Left cardiac atrium (tissue), 4 donors: ENCODE measurements at regions of chr6 and their contacts with region 1.

Region 1: DNA sequence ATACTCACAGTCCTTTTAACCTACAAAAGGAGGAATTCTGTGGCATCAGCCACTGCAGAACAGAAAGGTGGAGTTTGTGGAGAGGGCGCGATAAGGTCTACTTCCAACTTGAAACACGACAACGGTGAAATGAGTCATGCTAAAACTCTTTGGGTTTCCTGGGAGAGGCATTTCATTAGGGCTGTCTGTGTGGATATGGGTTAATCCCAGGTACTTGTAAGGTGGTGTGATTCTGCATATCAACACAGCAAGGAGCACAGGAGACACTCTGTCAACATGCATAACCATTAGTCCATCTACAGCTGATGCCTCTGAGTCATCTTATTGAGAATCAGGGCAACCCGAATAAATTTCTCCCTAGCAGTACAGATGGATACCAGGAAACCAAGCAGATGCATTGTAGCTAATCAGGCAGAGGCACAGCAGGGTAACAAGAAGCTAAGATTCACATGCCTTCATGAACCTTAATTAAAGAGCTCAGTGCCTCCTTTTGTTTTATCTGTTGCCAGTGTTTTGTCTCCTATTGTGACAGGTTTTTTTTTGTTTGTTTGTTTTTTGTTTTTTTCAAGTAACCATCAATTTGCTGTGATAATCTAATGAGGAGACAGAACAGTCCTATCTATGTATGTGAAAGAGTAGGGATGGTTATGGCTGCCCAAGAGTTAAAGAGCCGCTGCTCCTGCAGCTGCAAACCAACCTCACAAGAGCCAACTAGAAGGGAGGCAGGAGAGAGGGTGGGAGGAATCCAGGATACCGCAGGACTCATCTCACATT is 315.8 kb upstream of the SOX4 start:
- DNase-seq: no peak
- ATAC-seq: peak; percentile 35 to 84

Region 2: GRCh38 chr6:21046276-21046675 is 231.5 kb before region 1 on chr6:
- intact Hi-C with region 1: loop called in 1 of 2 experiments (anchors 10 kb)
- DNase-seq: peak; percentile 34
- ATAC-seq: peak; percentile 91 to 92

Region 3: DNA sequence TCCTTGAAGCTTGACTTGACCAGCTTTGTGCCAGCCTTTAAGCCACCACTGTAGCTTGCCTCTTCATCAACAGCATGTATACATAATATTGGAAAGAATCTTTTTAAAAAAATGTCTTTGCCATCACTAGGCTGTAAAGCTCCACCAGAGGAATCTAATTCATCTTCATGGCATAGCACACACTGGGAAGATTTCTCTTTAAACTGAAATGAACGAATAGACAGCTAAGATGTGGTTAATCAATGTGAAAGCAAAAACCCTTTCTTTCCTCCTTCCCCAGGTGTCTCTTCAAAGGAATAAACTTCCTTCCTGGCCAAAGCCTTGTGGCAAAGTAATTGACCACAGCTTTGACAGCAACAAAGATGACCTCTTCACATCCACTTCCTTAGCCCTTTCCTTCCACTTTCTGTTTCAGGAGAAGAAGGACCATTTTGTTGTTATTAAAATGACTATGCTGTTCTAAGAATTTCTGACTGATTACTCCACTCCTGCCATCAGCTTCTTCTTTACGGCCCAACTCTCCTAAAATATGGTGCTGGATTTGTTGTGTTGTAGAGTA is 112.9 kb before region 1 on chr6:
- intact Hi-C with region 1: loop called in 1 of 2 experiments (anchors 5 kb)
- DNase-seq: no peak
- ATAC-seq: no peak